MCF 10A (cell line): ENCODE measurements at regions of chr20 and their contacts with region 1.

Region 1: GRCh38 chr20:48295445-48295963 is 510.2 kb upstream of the SULF2 start:
- DNase-seq: peak; percentile 81
- H3K4me3 Mint-ChIP-seq: no peak overlapping the region
- H3K27ac Mint-ChIP-seq: peak overlapping the region; percentile 39
- H3K4me1 Mint-ChIP-seq: peaks cover 41% of the 10 kb centered on the region
- H3K27me3 Mint-ChIP-seq: peaks cover 8% of the 10 kb centered on the region
- CTCF ChIP-seq: peak; percentile 57

Region 2: GRCh38 chr20:47677635-47678453 is 617.7 kb before region 1 on chr20:
- CTCF ChIA-PET with region 1: interaction called, 28 read pairs
- POLR2A ChIA-PET with region 1: interaction called, 5 read pairs
- intact Hi-C with region 1: loop called (anchors 1 kb)
- DNase-seq: peak; percentile 60
- H3K4me3 Mint-ChIP-seq: no peak overlapping the region
- H3K27ac Mint-ChIP-seq: no peak overlapping the region
- H3K4me1 Mint-ChIP-seq: no peaks in the 10 kb centered on the region
- H3K27me3 Mint-ChIP-seq: no peaks in the 10 kb centered on the region
- CTCF ChIP-seq: peak; percentile 95

Region 3: DNA sequence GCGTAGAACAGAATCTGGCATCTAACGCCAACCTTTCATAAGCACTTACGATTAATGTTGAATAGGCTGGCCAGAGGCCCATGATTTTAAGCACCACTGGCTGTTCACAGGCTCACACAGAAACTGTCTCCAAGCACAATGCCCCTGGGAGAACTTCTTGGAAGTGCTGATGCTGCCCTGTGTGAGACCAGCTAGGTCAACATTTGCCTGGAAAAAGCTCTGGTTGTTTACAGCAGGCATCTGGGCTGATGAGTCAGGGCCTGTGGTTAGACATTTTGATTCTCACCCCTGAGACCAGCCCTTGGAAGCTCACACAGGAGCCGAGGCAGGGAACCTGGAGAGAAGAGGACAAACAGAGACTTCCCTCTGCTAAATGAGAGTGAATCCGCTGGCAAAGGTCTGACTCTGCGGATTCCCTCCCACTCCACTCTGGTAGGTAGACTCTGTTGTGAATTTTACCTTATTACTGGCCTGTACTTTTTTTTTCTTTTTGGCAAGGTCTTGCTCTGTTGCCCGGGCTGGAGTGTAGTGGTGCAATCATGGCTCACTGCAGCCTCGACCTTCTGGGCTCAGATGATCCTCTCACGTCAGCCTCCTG is 503.4 kb before region 1 on chr20:
- CTCF ChIA-PET with region 1: interaction called, 68 read pairs
- POLR2A ChIA-PET with region 1: interaction called, 41 read pairs
- intact Hi-C with region 1: loop called (anchors 1 kb)
- DNase-seq: peak; percentile 99
- H3K4me3 Mint-ChIP-seq: peak overlapping the region; percentile 77
- H3K27ac Mint-ChIP-seq: peak overlapping the region; percentile 94
- H3K4me1 Mint-ChIP-seq: peaks cover 50% of the 10 kb centered on the region
- H3K27me3 Mint-ChIP-seq: no peaks in the 10 kb centered on the region
- CTCF ChIP-seq: no peak

Region 4: DNA sequence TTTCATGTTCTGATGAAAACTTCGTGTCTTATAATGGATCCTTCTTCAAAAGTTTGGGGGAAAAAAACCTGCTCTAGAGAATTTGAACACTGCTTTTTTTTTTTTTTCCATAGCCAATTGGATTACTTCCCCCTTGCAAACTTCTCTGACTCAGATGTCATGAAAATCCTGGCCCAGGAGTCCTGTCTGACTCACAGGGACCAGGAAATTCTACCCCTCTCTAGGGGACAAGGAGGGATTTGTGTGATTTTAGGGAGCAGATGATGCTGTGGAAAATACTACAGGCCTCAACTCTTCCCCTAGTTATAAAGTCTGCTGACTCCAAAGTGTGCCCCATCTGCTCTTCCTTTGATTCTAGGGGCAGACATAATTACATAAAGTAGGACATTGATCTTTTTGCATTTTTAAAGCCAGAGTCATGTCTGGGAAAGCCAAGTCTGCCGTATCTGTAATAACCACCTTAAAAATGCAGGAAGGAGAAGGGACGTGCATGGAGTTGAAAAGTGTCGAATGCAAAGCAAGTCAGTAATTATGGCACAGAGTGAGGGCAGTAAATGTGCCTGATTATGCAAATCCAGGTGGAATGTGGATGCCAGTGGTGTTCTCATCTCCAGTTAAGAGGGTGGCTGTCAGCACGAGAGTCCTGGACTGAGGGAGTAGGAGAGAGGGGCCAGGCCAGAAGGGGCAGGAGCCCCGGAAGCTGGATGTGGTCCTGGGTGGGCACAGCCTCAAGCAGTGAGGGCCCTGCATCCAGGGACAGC is 366.0 kb before region 1 on chr20:
- CTCF ChIA-PET with region 1: interaction called, 4 read pairs
- POLR2A ChIA-PET with region 1: interaction called, 6 read pairs
- intact Hi-C with region 1: loop called (anchors 2 kb)
- DNase-seq: peak; percentile 79
- H3K4me3 Mint-ChIP-seq: no peak overlapping the region
- H3K27ac Mint-ChIP-seq: peak overlapping the region; percentile 94
- H3K4me1 Mint-ChIP-seq: peaks cover 52% of the 10 kb centered on the region
- H3K27me3 Mint-ChIP-seq: no peaks in the 10 kb centered on the region
- CTCF ChIP-seq: no peak

Region 5: DNA sequence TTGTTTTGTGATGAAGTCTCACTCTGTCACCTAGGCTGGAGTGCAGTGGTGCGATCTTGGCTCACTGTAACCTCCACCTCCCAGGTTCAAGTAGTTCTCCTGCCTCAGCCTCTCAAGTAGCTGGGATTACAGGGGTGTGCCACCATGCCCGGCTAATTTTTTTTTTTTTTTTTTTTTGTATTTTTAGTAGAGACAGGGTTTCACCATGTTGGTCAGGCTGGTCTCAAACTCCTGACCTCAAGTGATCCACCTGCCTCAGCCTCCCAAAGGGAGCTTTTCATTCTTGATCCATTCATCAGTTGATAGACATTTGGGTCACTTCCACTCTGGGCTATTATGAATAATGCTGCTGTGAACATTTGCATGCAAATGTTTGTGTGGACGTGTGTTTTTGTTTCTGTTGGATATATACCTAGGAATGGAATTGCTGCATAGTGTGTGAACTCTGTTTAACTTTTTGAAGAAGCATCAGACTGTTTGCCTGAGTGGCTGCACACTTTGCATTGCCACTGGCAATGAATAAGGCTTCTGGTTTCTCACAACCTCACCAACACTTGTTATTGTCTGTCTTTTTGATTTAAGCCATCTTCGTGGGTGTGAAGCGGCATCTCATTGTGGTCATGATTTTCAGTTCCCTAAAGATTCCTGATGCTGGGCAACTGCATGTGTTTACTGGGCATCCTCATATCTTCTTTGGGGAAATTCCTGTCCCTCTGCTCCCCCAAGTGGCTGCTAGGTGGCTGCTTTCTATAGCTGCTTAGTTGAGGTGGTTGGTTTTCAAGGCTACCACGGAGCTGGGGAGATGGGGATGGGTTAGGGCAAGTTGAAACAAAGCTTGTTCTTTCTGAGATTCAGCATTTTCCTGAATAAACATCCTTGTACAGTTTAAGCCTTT is 106.6 kb before region 1 on chr20:
- CTCF ChIA-PET with region 1: interaction called, 5 read pairs
- POLR2A ChIA-PET with region 1: interaction called, 5 read pairs
- intact Hi-C with region 1: loop called (anchors 1 kb)
- DNase-seq: peak; percentile 68
- H3K4me3 Mint-ChIP-seq: no peak overlapping the region
- H3K27ac Mint-ChIP-seq: no peak overlapping the region
- H3K4me1 Mint-ChIP-seq: peaks cover 23% of the 10 kb centered on the region
- H3K27me3 Mint-ChIP-seq: no peaks in the 10 kb centered on the region
- CTCF ChIP-seq: peak; percentile 37